A673 (cell line): ENCODE measurements at regions of chr5 and their contacts with region 1.

Region 1: GRCh38 chr5:179623003-179623880 is at the start of gene HNRNPH1:
- DNase-seq: peak; percentile 98
- H3K4me3 ChIP-seq: peak within 1 kb of the TSS; percentile 91
- H3K27ac ChIP-seq: peak within 1 kb of the TSS; percentile 99
- H3K4me1 ChIP-seq: peaks cover 29% of the 10 kb centered on the region
- H3K27me3 ChIP-seq: no peaks in the 10 kb centered on the region
- CTCF ChIP-seq: no peak
- total RNA-seq, gene HNRNPH1: 918 and 972 TPM in 2 replicates

Region 2: GRCh38 chr5:179414459-179415261 is 208.6 kb before region 1 on chr5:
- CTCF ChIA-PET with region 1: no interaction called
- POLR2A ChIA-PET with region 1: no interaction called
- intact Hi-C with region 1: no loop called
- DNase-seq: no peak
- H3K4me3 ChIP-seq: no peak overlapping the region
- H3K27ac ChIP-seq: no peak overlapping the region
- H3K4me1 ChIP-seq: peaks cover 15% of the 10 kb centered on the region
- H3K27me3 ChIP-seq: no peaks in the 10 kb centered on the region
- CTCF ChIP-seq: no peak

Region 3: GRCh38 chr5:179732417-179732917 is 109.2 kb after region 1 on chr5 and contains the start of gene MAML1:
- CTCF ChIA-PET with region 1: no interaction called
- POLR2A ChIA-PET with region 1: no interaction called
- intact Hi-C with region 1: loop called (anchors 1 kb)
- DNase-seq: peak; percentile 99
- H3K4me3 ChIP-seq: peak within 1 kb of the TSS; percentile 91
- H3K27ac ChIP-seq: peak within 1 kb of the TSS; percentile 97
- H3K4me1 ChIP-seq: peaks cover 10% of the 10 kb centered on the region
- H3K27me3 ChIP-seq: no peaks in the 10 kb centered on the region
- CTCF ChIP-seq: no peak
- total RNA-seq, gene MAML1: 34.3 and 34.4 TPM in 2 replicates